ENCODE measurements at regions of chr15 and their contacts with region 1.

Region 1: DNA sequence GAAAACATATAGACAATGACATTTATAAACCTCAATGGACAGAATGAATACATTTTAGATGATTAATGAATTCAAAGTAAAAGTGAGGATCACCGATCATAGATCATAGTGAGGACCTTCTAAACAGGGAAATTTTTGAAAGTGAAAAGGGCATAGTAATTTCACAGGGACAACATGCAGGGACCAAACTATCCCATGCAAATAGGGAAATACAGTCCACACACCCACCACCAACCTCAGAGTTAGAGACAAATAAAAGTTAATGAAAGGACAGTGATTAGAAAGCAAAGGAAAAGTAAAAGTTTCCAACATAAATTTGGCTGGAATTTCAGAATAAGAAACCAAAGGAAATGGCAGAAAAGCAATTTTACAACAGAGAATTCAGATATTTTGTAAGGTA is 15.4 kb upstream of the CHRNA7 start:
- DNase-seq: no peak
- ATAC-seq: no peak
- H3K4me3 ChIP-seq: no peak overlapping the region
- H3K27ac ChIP-seq: no peak overlapping the region
- H3K4me1 ChIP-seq: no peaks in the 10 kb centered on the region
- H3K27me3 ChIP-seq: peaks cover 0 to 27% (median 0%) of the 10 kb centered on the region in 9 donors
- CTCF ChIP-seq: no peak
- POLR2A ChIP-seq: no peak

Region 2: GRCh38 chr15:32060706-32061105 is 45.8 kb after region 1 on chr15:
- intact Hi-C with region 1: loop called in 1 of 10 experiments (anchors 10 kb)
- DNase-seq: no peak
- ATAC-seq: no peak
- H3K4me3 ChIP-seq: no peak overlapping the region
- H3K27ac ChIP-seq: no peak overlapping the region
- H3K4me1 ChIP-seq: no peaks in the 10 kb centered on the region
- H3K27me3 ChIP-seq: peaks cover 0 to 6% (median 0%) of the 10 kb centered on the region in 9 donors
- CTCF ChIP-seq: no peak
- POLR2A ChIP-seq: no peak

Measured in heart left ventricle (tissue), 16 donors.